Panc1 (cell line): ENCODE measurements at regions of chr5 and their contacts with region 1.

Region 1: DNA sequence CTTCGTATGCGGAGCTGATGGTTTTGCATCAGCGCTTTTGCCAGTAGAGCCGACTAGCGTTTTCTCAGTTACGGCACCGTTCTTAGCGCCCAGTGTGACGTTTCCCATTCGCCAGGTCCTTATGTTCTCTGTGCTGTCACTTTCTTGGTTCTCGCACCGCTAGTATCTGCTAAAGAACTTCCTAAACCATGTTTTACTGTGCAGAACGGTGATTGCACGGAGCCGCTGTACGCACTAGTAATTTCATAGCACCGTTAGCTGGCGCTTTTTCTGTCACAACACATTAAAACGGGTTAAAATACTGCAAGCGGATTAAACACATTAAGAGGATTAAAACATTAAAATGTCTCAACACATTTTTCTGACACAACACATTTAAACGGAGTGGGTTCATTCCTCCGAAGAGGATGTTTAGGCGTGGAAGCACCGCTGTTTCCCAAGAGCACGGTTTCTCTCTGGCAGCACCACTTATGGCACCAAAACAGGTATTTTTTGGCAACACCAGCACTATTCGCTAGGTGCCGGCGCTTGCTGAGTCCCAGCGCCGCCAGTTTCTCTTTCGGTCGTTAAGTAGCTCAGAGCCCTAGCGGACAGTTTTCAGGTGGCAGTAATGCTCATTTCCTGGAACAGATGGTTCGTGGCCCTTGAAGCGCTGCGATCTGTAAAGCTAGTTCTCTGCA is 20.4 kb downstream of the ANXA2R start:
- DNase-seq: peak; percentile 87
- ATAC-seq: peak; percentile 83
- H3K4me3 ChIP-seq: peak overlapping the region; percentile 65 to 75
- H3K27ac ChIP-seq: peak overlapping the region; percentile 97
- H3K4me1 ChIP-seq: peaks cover 37% of the 10 kb centered on the region
- H3K27me3 ChIP-seq: no peaks in the 10 kb centered on the region
- CTCF ChIP-seq: peak; percentile 60

Region 2: DNA sequence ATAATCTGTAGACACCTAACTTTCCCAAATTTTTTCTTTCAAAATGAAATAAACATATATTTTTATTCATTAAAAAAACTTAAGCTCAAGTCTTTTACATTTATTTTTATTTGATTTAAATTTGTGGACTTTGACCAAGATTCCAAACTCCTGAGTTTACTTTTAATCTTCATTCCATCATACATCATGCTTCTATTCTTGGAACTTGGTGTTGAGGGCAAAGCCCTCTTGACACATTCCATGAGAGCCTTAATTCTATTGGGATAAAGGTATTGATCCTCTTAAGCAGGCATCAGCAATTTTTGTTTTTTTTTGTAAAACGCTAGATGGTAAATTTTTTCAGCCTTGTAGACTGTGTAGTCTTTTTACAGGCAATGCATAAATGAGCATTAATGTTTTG is 1041.1 kb before region 1 on chr5:
- CTCF ChIA-PET with region 1: no interaction called
- POLR2A ChIA-PET with region 1: no interaction called
- in situ Hi-C with region 1: no loop called
- intact Hi-C with region 1: no loop called
- DNase-seq: no peak
- ATAC-seq: no peak
- H3K4me3 ChIP-seq: no peak overlapping the region
- H3K27ac ChIP-seq: no peak overlapping the region
- H3K4me1 ChIP-seq: no peaks in the 10 kb centered on the region
- H3K27me3 ChIP-seq: no peaks in the 10 kb centered on the region
- CTCF ChIP-seq: no peak

Region 3: DNA sequence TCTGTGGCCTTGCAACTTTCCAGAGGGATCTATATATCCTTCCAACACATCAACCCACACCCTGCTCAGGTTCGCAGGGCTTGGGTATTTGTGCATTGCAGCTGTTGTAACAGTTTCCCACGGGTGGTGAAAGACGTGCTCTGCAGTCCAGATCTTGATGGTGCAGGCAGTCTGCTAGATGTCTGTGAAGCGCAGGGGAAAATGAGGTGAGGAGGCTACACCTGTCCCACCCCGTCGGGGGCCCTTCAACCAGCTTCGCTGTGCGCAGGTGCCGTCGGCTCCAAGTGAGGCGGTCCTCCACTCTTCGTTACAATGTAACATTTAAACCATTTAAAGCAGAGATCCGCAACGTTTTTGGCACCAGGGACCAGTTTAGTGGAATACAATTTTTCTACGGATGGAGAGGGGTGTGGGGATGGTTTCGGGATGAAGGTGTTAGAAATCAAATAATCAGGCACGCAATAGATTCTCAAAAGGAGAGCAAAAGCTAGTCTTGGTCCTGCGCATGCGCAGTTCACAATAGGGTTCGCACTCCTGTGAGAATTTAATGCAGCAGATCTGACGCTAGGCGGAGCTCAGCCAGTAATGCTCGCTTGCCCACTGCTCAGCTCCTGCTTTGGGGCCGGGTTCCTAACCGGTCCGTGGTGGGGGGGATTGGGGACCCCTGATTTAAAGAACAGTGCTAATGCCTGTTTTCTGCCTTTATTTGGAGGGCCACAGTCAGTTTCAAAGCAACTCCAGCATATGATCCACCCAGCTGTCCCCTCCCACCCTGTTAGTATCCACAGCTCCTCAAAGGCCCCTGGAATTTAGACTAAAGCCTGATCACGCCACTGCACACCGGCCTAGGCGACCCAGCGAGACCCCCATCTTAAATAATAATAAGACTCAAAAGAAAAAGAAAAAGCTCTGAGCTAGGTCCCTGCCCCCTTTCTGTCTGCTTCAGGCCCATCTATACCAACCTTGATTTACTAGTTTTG is 111.0 kb before region 1 on chr5:
- CTCF ChIA-PET with region 1: interaction called, 10 read pairs
- POLR2A ChIA-PET with region 1: interaction called, 3 read pairs
- in situ Hi-C with region 1: loop called (anchors 25 kb)
- intact Hi-C with region 1: no loop called
- DNase-seq: peak; percentile 89
- ATAC-seq: peak; percentile 93
- H3K4me3 ChIP-seq: peak overlapping the region; percentile 56 to 79
- H3K27ac ChIP-seq: peak overlapping the region; percentile 75
- H3K4me1 ChIP-seq: peaks cover 8% of the 10 kb centered on the region; the same call in 1 of the 2 replicates
- H3K27me3 ChIP-seq: peaks cover 11% of the 10 kb centered on the region
- CTCF ChIP-seq: peak; percentile 94

Region 4: DNA sequence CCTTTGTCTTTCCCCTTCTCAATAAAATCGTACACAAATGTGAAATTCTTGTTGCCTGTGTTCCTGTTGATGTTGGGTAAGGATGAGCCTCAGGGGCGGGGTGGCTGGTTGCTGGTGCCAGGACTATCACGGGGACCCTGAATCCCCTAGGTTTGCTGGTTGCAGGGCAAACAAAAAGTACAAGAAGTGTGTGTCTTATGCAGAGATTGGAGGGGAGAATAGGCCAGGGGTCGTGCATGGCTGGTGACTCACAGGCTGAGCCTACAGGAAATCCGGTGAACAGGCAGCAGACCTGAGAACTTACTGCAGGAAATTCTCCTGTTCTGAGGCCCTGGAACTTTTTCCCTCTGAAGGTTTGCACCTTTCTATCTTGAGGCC is 14.8 kb after region 1 on chr5:
- CTCF ChIA-PET with region 1: interaction called, 3 read pairs
- POLR2A ChIA-PET with region 1: interaction called, 15 read pairs
- in situ Hi-C with region 1: no loop called
- intact Hi-C with region 1: loop called (anchors 2 kb)
- DNase-seq: peak; percentile 77
- ATAC-seq: peak; percentile 51
- H3K4me3 ChIP-seq: peak overlapping the region; percentile 58 to 59
- H3K27ac ChIP-seq: peak overlapping the region; percentile 99
- H3K4me1 ChIP-seq: peaks cover 25% of the 10 kb centered on the region
- H3K27me3 ChIP-seq: no peaks in the 10 kb centered on the region
- CTCF ChIP-seq: no peak

Region 5: GRCh38 chr5:43376496-43377140 is 356.9 kb after region 1 on chr5:
- CTCF ChIA-PET with region 1: no interaction called
- POLR2A ChIA-PET with region 1: no interaction called
- in situ Hi-C with region 1: no loop called
- intact Hi-C with region 1: no loop called
- DNase-seq: no peak
- ATAC-seq: no peak
- H3K4me3 ChIP-seq: no peak overlapping the region
- H3K27ac ChIP-seq: no peak overlapping the region
- H3K4me1 ChIP-seq: no peaks in the 10 kb centered on the region
- H3K27me3 ChIP-seq: no peaks in the 10 kb centered on the region
- CTCF ChIP-seq: no peak